OCI-LY7 (cell line): ENCODE measurements at regions of chr12 and their contacts with region 1.

Region 1: DNA sequence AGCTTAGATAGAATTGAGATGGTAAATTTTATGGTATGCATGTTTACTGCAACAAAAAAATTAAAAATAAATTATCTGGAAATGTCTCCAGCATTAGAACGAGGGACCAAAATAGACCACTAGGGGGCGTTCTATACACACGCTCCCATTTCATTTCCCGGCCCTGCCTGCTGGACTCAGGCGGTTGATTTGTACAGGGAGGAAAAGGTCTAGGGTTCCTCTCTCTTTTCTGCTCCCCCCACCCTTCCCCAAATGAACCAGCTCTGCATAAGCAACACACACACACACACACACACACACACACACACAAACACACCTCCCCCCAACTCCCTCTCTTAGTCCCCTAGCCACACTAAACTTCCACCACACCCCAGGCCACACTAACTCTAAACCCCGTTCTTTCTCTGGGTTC is 7.8 kb upstream of the DTX1 start:
- DNase-seq: peak; percentile 91
- H3K4me3 ChIP-seq: no peak overlapping the region
- H3K27ac ChIP-seq: peak overlapping the region; percentile 97
- H3K4me1 ChIP-seq: peaks cover 73% of the 10 kb centered on the region
- CTCF ChIP-seq: peak; percentile 96

Region 2: DNA sequence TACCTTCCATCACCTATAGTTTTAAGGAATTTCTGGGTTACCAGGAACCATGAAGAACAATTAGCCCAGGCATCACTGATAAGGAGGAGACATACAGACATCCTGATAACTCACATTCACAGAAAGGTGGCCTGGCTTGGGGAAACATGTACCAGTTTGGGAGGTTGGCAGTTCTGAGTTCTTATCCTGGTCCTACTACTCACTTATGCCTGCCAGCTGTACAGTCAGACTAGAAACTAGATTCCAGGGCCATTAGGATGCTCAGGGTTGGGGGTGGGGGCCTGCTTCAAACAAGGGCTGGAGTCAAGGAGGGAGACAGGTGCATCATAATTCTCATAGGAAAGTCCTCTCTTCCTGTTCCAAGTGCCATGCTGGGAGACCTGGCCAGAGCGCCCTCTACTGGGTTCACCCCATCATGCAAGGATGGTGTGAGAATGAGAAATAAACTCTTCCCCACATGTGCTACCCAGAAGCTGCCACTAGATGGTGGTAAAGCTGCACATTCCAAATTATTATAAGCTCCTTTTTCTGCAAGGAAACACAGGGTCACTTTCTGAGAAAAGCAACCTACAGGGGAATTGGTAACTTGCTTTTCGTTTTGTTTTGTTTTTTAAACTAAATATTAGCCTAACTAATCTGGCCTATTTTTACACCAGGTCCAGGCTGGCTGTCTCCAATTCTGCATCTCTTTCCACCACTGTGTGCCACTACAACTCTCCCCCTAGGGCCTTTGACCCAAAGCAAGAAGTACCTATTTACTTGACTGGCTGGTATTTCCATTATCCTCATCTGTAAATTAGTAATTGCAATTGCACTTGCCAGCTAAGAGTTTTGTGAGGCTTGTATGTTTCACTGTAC is 56.0 kb before region 1 on chr12:
- CTCF ChIA-PET with region 1: interaction called, 8 read pairs
- POLR2A ChIA-PET with region 1: interaction called, 6 read pairs
- intact Hi-C with region 1: loop called (anchors 2 kb)
- DNase-seq: peak; percentile 82
- H3K4me3 ChIP-seq: no peak overlapping the region
- H3K27ac ChIP-seq: peak overlapping the region; percentile 47
- H3K4me1 ChIP-seq: peaks cover 30% of the 10 kb centered on the region
- CTCF ChIP-seq: peak; percentile 100

Region 3: DNA sequence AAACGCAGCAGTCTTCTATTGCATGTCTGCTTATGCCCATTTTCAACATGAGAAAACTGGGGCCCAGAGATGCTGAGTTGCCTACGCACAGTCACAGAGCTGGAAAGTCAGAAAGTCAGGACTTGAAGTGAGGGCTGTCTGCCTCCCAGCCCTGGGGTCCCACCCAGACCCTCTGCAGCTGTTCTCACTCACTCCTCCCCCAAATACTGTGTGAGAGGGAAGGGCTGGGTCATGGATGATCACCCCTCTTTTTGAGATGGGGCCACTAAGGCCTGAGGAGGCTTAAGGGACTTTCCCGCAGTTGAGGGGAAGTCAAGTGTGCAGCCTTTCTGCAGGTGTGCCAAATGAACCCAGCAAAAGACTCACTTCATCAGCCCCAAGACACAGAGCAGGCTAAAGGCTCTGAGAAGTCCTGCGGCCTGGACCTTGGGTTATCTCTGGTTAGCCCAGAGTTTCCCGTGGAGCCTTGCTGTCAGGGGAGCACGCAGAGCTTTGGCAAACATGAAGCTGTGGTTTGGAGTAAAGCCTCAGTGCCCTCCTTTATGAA is 26.5 kb after region 1 on chr12:
- CTCF ChIA-PET with region 1: no interaction called
- POLR2A ChIA-PET with region 1: interaction called, 235 read pairs
- intact Hi-C with region 1: loop called (anchors 1 kb)
- DNase-seq: peak; percentile 99
- H3K4me3 ChIP-seq: peak overlapping the region; percentile 34
- H3K27ac ChIP-seq: peak overlapping the region; percentile 97
- H3K4me1 ChIP-seq: peaks cover 95% of the 10 kb centered on the region
- CTCF ChIP-seq: no peak

Region 4: DNA sequence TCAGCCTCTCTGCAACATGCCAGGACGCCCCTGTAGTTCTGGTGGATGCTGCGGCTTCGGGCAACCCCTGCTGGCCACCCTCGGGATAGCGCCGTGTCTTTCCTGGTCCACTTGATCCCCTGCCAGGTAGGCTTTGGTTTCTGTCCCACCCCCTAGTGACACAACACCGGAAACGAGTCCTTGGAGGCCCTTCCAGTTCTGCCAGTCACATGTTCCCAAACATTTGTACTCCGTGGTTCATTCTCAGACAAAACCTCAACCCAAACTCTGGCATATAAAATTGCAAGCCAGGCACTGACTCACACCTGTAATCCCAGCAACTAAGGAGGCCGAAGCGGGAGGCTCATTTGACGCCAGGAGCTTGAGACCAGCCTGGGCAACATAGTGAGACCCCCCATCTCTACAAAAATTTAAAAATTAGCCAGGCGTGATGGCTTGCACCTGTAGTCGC is 49.7 kb after region 1 on chr12:
- CTCF ChIA-PET with region 1: interaction called, 8 read pairs
- POLR2A ChIA-PET with region 1: interaction called, 9 read pairs
- intact Hi-C with region 1: loop called (anchors 1 kb)
- DNase-seq: peak; percentile 82
- H3K4me3 ChIP-seq: no peak overlapping the region
- H3K27ac ChIP-seq: peak overlapping the region; percentile 88
- H3K4me1 ChIP-seq: peaks cover 75% of the 10 kb centered on the region
- CTCF ChIP-seq: peak; percentile 91

Region 5: GRCh38 chr12:113152835-113153814 is 104.4 kb after region 1 on chr12:
- CTCF ChIA-PET with region 1: interaction called, 9 read pairs
- POLR2A ChIA-PET with region 1: interaction called, 4 read pairs
- intact Hi-C with region 1: loop called (anchors 1 kb)
- DNase-seq: peak; percentile 92
- H3K4me3 ChIP-seq: peak overlapping the region; percentile 78
- H3K27ac ChIP-seq: peak overlapping the region; percentile 90
- H3K4me1 ChIP-seq: peaks cover 57% of the 10 kb centered on the region
- CTCF ChIP-seq: peak; percentile 79